HepG2 (cell line): ENCODE measurements at regions of chr12 and their contacts with region 1.

Region 1: GRCh38 chr12:10562306-10562933 is 51.0 kb downstream of the MAGOHB start:
- DNase-seq: peak; percentile 16
- ATAC-seq: no peak
- H3K4me3 ChIP-seq: no peak overlapping the region
- H3K27ac ChIP-seq: no peak overlapping the region
- H3K4me1 ChIP-seq: no peaks in the 10 kb centered on the region
- H3K27me3 ChIP-seq: 0 out of 5 replicates have a peak, but pooled peaks cover 0 to under 1% of the 10 kb centered on the region in 2 experiments
- CTCF ChIP-seq: peak; percentile 64
- EP300 ChIP-seq: no peak
- POLR2A ChIP-seq: no peak
- RAD21 ChIP-seq: peak; percentile 49; the same call in 1 of the 2 replicates

Region 2: DNA sequence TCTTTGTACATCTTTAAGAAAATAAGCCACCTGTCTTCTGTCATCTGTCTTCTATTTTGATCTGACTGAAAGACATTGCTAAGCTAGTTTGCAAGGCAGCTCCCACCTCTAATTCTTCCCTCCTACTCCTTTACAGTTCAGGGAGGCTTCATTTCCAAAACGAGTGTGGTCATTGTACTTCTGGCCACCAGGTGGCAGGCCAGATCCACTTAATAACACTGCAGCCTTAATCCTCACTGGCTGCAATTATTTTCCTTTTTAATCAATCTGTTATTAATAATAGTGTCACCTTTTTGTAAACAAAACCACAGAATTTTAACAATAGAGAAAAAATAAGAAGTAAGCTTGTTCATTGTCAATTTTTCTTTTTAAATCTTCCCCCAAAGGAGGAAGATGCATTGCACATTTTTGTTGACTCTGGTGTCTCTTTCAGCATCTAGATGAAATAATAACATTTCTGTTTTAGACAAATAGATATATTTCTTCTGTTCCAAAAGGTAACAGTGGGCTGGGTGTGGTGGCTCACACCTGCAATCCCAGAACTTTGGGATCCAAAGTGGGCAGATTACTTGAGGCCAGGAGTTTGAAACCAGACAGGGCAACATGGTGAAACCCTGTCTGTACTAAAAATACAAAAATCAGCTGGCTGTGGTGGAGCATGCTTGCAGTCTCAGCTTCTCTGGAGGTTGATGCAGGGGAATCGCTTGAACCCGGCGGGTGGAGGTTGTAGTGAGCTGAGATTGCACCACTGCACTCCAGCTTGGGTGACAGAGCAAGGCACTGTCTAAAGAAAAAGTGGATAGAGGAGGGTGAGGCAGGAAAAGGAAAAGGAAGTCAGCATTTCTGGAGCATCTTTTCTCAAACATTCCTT is 326.4 kb before region 1 on chr12:
- CTCF ChIA-PET with region 1: interaction called, 25 read pairs
- POLR2A ChIA-PET with region 1: no interaction called
- in situ Hi-C with region 1: loop called (anchors 5 kb)
- intact Hi-C with region 1: loop called (anchors 1 kb)
- DNase-seq: peak; percentile 17
- ATAC-seq: peak; percentile 67
- H3K4me3 ChIP-seq: no peak overlapping the region
- H3K27ac ChIP-seq: no peak overlapping the region
- H3K4me1 ChIP-seq: no peaks in the 10 kb centered on the region
- H3K27me3 ChIP-seq: 0 out of 5 replicates have a peak, but pooled peaks cover 0 to 1% of the 10 kb centered on the region in 2 experiments
- CTCF ChIP-seq: peak; percentile 81
- EP300 ChIP-seq: no peak
- POLR2A ChIP-seq: no peak
- RAD21 ChIP-seq: 0 out of 2 replicates have a peak, but pooled peaks have one; percentile 37

Region 3: GRCh38 chr12:10320643-10321042 is 241.8 kb before region 1 on chr12:
- CTCF ChIA-PET with region 1: no interaction called
- POLR2A ChIA-PET with region 1: no interaction called
- in situ Hi-C with region 1: loop called (anchors 10 kb)
- intact Hi-C with region 1: no loop called
- DNase-seq: no peak
- ATAC-seq: no peak
- H3K4me3 ChIP-seq: no peak overlapping the region
- H3K27ac ChIP-seq: no peak overlapping the region
- H3K4me1 ChIP-seq: no peaks in the 10 kb centered on the region
- H3K27me3 ChIP-seq: no peaks in the 10 kb centered on the region
- CTCF ChIP-seq: no peak
- EP300 ChIP-seq: no peak
- POLR2A ChIP-seq: no peak
- RAD21 ChIP-seq: no peak

Region 4: GRCh38 chr12:10364815-10365622 is 197.4 kb before region 1 on chr12:
- CTCF ChIA-PET with region 1: interaction called, 3 read pairs
- POLR2A ChIA-PET with region 1: no interaction called
- in situ Hi-C with region 1: no loop called
- intact Hi-C with region 1: loop called (anchors 1 kb)
- DNase-seq: peak; percentile 53
- ATAC-seq: peak; percentile 57
- H3K4me3 ChIP-seq: peak overlapping the region; percentile 74 to 82 (median 78)
- H3K27ac ChIP-seq: peak overlapping the region; percentile 0
- H3K4me1 ChIP-seq: peaks cover 24% of the 10 kb centered on the region
- H3K27me3 ChIP-seq: no peaks in the 10 kb centered on the region; a peak in 1 of 5 replicates
- CTCF ChIP-seq: no peak
- EP300 ChIP-seq: no peak
- POLR2A ChIP-seq: no peak
- RAD21 ChIP-seq: no peak

Region 5: DNA sequence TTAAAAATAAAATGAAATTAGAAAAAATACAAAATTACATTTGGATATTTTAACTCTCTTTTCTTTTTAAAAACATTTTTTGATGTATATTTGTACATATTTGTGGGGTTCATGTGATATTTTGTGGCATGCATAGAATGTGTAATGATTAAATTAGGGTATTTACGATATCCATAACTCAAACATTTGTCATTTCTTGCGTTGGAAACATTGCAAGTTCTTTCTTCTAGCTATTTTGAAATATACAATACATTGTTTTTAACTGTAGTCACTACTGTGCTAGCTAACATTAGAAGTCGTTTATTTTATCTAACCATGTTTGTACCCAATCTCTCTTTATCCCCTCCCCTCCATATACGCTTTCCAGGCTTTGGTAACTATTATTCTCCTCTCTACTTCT is 70.7 kb before region 1 on chr12:
- CTCF ChIA-PET with region 1: no interaction called
- POLR2A ChIA-PET with region 1: no interaction called
- in situ Hi-C with region 1: no loop called
- intact Hi-C with region 1: no loop called
- DNase-seq: no peak
- ATAC-seq: no peak
- H3K4me3 ChIP-seq: no peak overlapping the region
- H3K27ac ChIP-seq: no peak overlapping the region
- H3K4me1 ChIP-seq: no peaks in the 10 kb centered on the region
- H3K27me3 ChIP-seq: no peaks in the 10 kb centered on the region
- CTCF ChIP-seq: no peak
- EP300 ChIP-seq: no peak
- POLR2A ChIP-seq: no peak
- RAD21 ChIP-seq: no peak

Region 6: DNA sequence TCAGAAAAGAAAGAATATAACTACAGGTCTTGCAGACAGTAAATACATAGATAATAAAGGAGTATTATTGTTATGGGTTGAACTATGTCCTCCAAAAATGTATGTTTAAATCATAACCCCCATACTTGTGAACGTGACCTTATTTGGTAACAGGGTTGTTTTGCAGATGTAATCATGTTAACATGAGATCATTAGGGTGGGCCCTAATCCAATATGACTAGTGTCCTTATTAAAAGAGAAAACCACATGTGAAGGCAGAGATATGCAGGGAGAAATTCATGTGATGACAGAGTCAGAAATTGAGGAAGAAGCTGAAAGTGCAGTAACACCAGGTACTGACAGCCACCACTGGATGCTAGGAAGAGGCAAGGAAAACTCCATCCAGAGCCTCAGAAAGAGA is 22.0 kb after region 1 on chr12:
- CTCF ChIA-PET with region 1: no interaction called
- POLR2A ChIA-PET with region 1: no interaction called
- in situ Hi-C with region 1: no loop called
- intact Hi-C with region 1: no loop called
- DNase-seq: no peak
- ATAC-seq: no peak
- H3K4me3 ChIP-seq: no peak overlapping the region
- H3K27ac ChIP-seq: no peak overlapping the region
- H3K4me1 ChIP-seq: no peaks in the 10 kb centered on the region
- H3K27me3 ChIP-seq: no peaks in the 10 kb centered on the region
- CTCF ChIP-seq: no peak
- EP300 ChIP-seq: no peak
- POLR2A ChIP-seq: no peak
- RAD21 ChIP-seq: no peak

Region 7: GRCh38 chr12:10794222-10794621 is 231.8 kb after region 1 on chr12:
- CTCF ChIA-PET with region 1: no interaction called
- POLR2A ChIA-PET with region 1: no interaction called
- in situ Hi-C with region 1: no loop called
- intact Hi-C with region 1: no loop called
- DNase-seq: no peak
- ATAC-seq: no peak
- H3K4me3 ChIP-seq: no peak overlapping the region
- H3K27ac ChIP-seq: no peak overlapping the region
- H3K4me1 ChIP-seq: no peaks in the 10 kb centered on the region
- H3K27me3 ChIP-seq: 0 out of 5 replicates have a peak, but pooled peaks cover 0 to 3% of the 10 kb centered on the region in 2 experiments
- CTCF ChIP-seq: no peak
- EP300 ChIP-seq: no peak
- POLR2A ChIP-seq: no peak
- RAD21 ChIP-seq: no peak

Region 8: DNA sequence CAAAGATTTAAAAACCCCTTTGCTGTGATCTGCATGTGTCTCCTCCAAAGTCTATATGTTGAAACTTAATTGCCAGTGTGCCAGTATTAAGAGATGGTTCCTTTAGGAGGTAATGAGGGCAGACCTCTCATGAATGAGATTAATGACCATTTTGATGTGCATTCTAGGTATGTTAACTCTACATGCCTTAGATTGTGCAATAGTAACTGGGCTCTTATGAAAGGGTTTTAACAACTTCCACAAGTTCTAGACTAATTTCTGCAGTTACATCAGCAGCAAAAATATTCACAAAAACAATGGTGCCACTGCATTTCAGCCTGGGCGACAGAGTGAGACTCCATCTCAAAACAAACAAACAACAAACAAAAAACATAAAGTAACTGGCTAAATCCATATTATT is 267.6 kb after region 1 on chr12:
- CTCF ChIA-PET with region 1: no interaction called
- POLR2A ChIA-PET with region 1: no interaction called
- in situ Hi-C with region 1: no loop called
- intact Hi-C with region 1: no loop called
- DNase-seq: peak; percentile 3
- ATAC-seq: no peak
- H3K4me3 ChIP-seq: no peak overlapping the region
- H3K27ac ChIP-seq: no peak overlapping the region
- H3K4me1 ChIP-seq: no peaks in the 10 kb centered on the region
- H3K27me3 ChIP-seq: no peaks in the 10 kb centered on the region
- CTCF ChIP-seq: no peak
- EP300 ChIP-seq: no peak
- POLR2A ChIP-seq: no peak
- RAD21 ChIP-seq: no peak